ENCODE measurements at regions of chr7 and their contacts with region 1.

Region 1: DNA sequence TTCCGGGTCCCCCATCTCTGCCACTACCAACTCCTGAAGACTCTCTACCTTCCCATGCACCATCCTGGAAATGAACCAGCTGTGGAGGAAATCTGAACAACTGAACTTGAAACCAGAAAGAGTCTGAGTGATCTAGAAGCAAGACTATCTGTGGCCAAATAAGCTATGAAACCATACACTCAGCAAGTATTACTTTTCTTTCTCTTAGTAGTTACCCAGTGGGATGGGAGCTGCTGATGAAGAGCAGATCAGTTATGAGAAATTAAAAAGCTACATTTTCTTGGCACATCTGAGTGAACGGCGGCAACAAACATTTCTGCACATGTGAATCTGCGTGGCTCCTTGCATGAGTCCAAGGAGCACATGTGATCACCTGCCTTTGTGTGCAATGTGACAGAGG is 31.6 kb upstream of the AGK start:
- DNase-seq: no peak
- H3K4me3 ChIP-seq: no peak overlapping the region
- H3K27ac ChIP-seq: no peak overlapping the region
- H3K4me1 ChIP-seq: no peaks in the 10 kb centered on the region
- H3K27me3 ChIP-seq: no peaks in the 10 kb centered on the region
- CTCF ChIP-seq: no peak
- EP300 ChIP-seq: no peak
- POLR2A ChIP-seq: no peak

Region 2: DNA sequence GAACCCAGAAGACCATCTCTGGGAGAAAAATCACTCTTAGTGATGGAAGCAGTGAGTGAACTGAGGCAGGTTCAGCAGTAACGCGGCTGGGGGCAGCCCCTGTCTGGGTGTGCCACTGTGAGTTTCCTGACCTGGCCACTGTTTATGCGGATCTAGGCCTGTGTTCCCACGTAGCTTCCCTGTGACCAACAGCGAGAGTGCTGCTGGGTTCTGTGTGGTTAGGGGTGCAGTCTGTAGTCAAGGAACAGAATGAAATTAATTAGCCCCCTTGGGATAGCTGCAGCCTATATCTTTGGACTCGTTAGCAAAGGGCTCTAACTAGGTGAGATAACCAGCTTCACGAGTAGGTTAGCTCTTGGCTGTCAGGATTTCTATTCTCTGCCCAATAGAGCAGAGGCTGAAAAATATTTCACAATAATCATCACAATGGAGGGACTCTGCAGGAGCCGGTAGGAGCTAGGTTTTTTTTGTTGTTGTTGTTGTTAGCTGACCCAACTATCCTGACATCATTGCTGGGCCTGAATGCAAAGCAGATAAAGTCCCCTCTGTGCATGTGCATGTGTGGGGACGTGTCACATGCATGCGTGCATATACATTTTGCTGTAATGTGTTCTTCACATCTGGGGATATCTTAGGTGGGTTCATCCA is 280.9 kb before region 1 on chr7:
- intact Hi-C with region 1: no loop called
- DNase-seq: no peak
- H3K4me3 ChIP-seq: no peak overlapping the region
- H3K27ac ChIP-seq: no peak overlapping the region
- H3K4me1 ChIP-seq: no peaks in the 10 kb centered on the region
- H3K27me3 ChIP-seq: no peaks in the 10 kb centered on the region
- CTCF ChIP-seq: no peak
- EP300 ChIP-seq: no peak
- POLR2A ChIP-seq: no peak

Region 3: GRCh38 chr7:141575654-141576448 is 56.2 kb after region 1 on chr7:
- intact Hi-C with region 1: loop called in 1 of 4 experiments (anchors 2 kb)
- DNase-seq: no peak
- H3K4me3 ChIP-seq: no peak overlapping the region
- H3K27ac ChIP-seq: no peak overlapping the region
- H3K4me1 ChIP-seq: no peaks in the 10 kb centered on the region
- H3K27me3 ChIP-seq: no peaks in the 10 kb centered on the region
- CTCF ChIP-seq: no peak
- EP300 ChIP-seq: no peak
- POLR2A ChIP-seq: no peak

Measured in ovary (tissue), 10 donors.